Activated T-helper 1 cell treated with anti-CD3 and anti-CD28 coated beads, Interleukin-12 subunit alpha, Interleukin-12 subunit beta, Interleukin-2, Interleukin-4 antibody, amounts not matched to agents 30 ng/mL and 10 ng/mL and 1 ng/mL, durations not matched to agents 14 hours and 24 hours and 36 hours (primary cell): ENCODE measurements at regions of chr4 and their contacts with region 1.

Region 1: DNA sequence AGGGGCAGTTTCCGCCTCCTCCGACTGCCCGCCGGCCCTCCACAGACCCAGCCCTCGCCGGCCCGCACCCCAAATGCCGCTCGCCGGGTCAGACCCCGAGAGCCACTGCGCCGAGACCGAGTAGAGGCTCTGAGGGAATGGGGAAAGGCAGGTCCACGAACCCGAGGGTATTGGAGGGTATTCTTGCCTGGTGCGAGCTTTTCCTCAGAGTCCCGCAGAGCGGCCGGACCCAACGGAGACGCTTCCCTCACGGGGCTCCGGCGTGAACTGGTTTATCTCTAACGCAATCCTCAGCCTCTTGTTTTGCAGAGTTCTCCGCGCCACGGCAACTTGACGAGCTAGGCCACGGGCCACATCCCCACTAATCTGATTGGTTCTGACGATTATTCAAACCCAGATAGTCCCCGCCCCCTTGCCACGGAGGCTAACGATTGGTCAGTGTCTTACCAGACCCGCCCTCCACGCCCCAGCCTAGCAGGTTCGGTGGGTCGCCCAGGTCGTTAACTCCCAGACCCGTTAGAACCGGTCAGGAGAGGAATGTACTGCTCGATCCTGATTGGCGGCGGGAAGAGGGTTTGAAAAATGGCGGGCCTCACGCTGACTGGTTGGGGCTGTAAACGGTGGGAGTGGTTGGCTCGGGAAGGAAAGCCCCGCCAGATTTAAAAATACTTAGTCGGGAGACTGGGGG is at the start of gene HMGB2:
- DNase-seq: peak; percentile 99
- H3K4me3 Mint-ChIP-seq: peak within 1 kb of the TSS; percentile 98
- H3K27ac Mint-ChIP-seq: peak within 1 kb of the TSS; percentile 99
- H3K4me1 Mint-ChIP-seq: peaks cover 56% of the 10 kb centered on the region
- H3K27me3 Mint-ChIP-seq: no peaks in the 10 kb centered on the region
- total RNA-seq, gene HMGB2: 274 and 292 TPM in 2 replicates

Region 2: DNA sequence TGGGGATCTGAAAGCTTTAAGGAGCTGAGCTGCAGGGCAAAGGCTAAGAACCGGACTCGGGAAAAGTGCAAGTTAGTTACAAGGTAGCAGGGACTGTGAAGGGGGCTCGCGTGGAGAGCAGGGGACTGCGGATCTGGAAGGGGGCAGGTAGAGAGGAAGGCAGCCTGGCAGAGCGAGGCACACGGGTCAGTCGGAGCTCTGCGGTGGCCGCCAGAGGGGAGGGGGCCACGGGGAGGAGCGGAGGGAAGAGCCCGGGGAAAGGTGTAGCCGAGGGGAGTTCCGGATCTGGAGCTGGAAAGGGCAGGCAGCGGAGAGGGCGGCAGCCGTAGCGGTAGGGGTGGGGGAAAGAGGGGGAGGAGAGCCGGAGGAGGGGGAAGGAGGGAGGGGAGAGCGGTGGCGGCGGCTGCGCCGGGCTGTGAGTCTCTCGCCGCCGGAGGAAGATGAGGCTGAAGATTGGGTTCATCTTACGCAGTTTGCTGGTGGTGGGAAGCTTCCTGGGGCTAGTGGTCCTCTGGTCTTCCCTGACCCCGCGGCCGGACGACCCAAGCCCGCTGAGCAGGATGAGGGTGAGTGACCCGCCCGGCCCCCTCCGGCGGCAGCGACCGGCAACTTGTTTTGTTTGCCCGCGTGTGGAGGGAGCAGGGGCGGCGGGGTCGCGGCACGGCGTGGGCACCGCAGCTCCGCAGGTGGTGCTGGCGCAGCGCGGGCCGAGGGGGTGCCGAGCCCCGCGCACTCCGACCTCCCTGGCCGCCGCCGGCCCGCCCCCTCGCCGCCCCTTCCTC is 165.6 kb before region 1 on chr4 and contains the start of gene GALNT7:
- intact Hi-C with region 1: loop called (anchors 1 kb)
- DNase-seq: peak; percentile 45
- H3K4me3 Mint-ChIP-seq: peak within 1 kb of the TSS; percentile 90
- H3K27ac Mint-ChIP-seq: peak within 1 kb of the TSS; percentile 92
- H3K4me1 Mint-ChIP-seq: peaks cover 35% of the 10 kb centered on the region
- H3K27me3 Mint-ChIP-seq: no peaks in the 10 kb centered on the region
- total RNA-seq, gene GALNT7: 24.6 and 30.5 TPM in 2 replicates

Region 3: DNA sequence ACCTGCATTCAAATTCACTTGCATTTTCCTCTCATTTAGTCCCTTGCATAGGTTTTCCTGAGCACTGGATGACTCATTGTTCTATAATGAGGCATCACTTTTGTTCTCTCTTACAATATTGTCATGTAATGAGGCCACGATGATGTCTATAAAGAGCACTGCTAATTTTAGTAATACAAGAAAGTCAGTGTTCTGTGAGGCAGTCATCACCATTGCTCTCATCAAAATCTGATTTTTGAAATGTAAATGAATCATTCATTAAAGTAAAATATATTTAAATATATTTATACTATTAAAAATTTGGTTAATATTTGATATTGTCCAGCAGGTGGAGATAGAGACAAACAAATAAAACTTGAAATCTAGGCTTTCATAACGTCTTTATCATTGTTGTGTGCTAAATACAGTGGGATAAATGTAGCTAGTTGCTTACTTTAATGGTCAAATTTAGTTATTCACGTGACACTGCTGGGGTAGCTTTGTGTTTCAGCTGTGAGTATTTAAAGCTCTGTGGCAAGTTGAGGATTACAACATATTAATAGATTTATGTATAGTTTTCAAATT is 15.5 kb before region 1 on chr4:
- intact Hi-C with region 1: loop called (anchors 1 kb)
- DNase-seq: no peak
- H3K4me3 Mint-ChIP-seq: no peak overlapping the region
- H3K27ac Mint-ChIP-seq: no peak overlapping the region
- H3K4me1 Mint-ChIP-seq: peaks cover 6% of the 10 kb centered on the region
- H3K27me3 Mint-ChIP-seq: no peaks in the 10 kb centered on the region

Region 4: DNA sequence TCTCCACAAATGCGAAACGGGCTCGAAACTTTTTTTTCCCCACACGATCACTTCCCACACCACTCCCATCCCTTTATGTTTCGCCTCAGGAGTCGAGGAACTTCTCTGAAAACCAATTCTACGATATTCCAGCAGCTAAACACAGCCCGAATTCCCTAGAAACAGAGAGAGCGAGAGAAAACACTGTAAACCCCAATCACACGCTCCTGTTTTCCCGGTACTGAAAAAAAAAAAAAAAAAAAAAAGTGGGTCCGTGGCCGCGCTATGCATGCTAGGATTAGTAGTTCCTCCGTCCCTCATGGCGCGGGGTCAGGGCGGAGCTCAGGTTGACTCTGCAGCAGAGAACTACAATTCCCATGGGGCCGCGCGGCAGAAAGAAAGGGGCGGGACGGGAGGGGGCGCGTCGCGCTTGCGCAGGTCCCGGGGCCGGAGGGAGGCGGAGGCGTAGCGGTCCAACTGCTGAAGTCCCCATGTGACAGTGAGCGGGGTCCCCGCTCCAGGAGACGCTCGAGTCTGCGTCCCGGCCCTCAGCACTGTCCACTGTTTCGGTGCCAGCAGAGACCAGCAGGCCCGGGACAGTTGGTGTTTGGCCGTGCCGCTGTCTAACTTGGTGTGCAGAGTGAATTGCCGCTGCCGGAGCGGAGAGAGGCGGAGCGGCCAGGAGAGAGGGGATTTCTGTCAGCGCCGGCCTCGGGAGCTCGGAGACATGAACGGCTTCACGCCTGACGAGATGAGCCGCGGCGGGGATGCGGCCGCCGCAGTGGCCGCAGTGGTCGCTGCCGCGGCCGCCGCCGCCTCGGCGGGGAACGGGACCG is 36.5 kb after region 1 on chr4 and contains the start of gene SAP30:
- intact Hi-C with region 1: loop called (anchors 1 kb)
- DNase-seq: peak; percentile 92
- H3K4me3 Mint-ChIP-seq: peak within 1 kb of the TSS; percentile 100
- H3K27ac Mint-ChIP-seq: peak within 1 kb of the TSS; percentile 99
- H3K4me1 Mint-ChIP-seq: peaks cover 61% of the 10 kb centered on the region
- H3K27me3 Mint-ChIP-seq: no peaks in the 10 kb centered on the region
- total RNA-seq, gene SAP30: 29.3 and 30.9 TPM in 2 replicates

Region 5: DNA sequence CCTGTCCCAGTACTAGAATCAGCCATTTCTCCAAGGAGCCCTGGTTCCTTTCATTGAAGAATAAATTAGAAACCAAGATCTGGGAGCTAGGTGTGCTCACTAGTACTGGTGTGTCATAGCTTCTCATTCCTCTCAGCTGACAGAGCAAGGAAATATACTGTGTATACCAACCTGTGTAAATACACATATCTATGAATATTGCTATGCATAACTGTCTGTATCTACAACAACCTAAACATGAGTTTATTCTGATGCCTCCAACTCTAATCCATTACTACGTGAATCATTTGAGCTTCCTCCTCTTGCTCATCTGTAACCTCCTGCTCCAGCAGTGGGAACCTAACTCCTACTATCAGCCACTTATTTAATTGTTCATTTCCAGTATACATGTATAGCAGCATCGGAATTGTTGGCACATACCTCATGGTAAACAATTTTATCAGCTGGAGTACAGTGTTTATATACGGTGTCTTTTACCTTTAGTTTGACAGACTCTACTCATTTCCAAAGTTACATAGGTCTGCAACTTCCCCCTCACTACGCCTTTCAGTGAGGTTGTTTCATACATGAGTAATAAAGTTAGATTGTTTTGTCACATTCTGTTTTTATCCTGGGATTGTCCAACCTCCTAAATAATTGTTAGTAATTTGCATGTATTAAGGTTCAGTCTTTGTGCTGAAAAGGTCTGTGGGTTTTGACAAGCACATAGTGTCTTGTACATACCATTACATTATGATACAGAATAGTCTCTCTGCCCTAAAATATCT is 71.8 kb after region 1 on chr4:
- intact Hi-C with region 1: loop called (anchors 2 kb)
- DNase-seq: no peak
- H3K4me3 Mint-ChIP-seq: no peak overlapping the region
- H3K27ac Mint-ChIP-seq: no peak overlapping the region
- H3K4me1 Mint-ChIP-seq: peaks cover 11% of the 10 kb centered on the region
- H3K27me3 Mint-ChIP-seq: no peaks in the 10 kb centered on the region

Region 6: DNA sequence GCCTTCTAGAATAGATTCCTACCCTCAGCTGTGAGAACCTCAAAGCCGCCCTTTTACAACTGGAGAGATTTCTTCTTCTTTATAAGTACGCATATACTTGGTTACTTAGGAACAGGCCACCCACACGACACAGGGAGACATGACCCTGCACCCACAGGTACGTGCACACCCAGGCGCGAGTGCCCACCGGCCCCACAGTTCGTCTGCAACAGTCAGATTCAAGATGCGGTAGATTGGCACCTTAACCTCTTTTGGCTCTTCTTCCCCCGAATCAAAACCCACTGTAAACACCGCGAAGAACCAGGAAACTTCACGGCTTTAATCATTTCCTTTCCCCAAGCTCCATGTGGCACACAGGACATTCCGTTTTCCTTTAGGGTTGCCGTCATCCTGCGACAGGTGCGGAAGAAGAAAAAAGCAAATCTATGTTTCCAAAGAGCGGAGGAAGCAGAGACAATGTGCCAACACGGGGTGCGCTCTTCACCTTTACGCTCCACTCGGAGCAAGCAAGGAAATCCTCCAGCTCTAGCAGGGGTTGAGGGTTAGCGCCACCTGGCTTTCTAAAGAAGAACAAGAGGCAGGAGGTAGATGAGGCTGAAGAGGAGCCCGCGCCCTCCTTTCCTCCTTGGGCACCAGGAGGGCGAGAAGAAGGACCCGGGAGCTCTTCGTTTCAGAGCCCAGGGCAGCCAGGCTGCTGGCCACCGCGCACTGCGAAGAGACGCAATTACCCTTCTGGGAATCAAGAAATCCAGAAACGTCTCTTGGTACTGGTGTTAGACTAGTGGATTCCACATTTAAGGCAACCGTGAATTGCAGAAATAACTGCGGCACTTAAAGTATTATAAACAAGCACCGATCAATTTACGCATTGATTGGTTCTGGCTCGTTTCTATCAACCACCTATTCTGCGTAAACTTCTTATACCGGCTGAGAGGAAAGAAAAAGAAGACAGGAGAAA is 160.1 kb after region 1 on chr4:
- intact Hi-C with region 1: loop called (anchors 5 kb)
- DNase-seq: peak; percentile 56
- H3K4me3 Mint-ChIP-seq: peak overlapping the region; percentile 87
- H3K27ac Mint-ChIP-seq: no peak overlapping the region
- H3K4me1 Mint-ChIP-seq: peaks cover 33% of the 10 kb centered on the region
- H3K27me3 Mint-ChIP-seq: peaks cover 35% of the 10 kb centered on the region